Activated T-helper 2 cell treated with anti-CD3 and anti-CD28 coated beads, Interferon-gamma antibody, Interleukin-2, Interleukin-4, amounts not matched to agents 10 μg/mL and 5 μg/mL and 100 μg/mL, durations not matched to agents 14 hours and 24 hours and 36 hours (primary cell): ENCODE measurements at regions of chr7 and their contacts with region 1.

Region 1: DNA sequence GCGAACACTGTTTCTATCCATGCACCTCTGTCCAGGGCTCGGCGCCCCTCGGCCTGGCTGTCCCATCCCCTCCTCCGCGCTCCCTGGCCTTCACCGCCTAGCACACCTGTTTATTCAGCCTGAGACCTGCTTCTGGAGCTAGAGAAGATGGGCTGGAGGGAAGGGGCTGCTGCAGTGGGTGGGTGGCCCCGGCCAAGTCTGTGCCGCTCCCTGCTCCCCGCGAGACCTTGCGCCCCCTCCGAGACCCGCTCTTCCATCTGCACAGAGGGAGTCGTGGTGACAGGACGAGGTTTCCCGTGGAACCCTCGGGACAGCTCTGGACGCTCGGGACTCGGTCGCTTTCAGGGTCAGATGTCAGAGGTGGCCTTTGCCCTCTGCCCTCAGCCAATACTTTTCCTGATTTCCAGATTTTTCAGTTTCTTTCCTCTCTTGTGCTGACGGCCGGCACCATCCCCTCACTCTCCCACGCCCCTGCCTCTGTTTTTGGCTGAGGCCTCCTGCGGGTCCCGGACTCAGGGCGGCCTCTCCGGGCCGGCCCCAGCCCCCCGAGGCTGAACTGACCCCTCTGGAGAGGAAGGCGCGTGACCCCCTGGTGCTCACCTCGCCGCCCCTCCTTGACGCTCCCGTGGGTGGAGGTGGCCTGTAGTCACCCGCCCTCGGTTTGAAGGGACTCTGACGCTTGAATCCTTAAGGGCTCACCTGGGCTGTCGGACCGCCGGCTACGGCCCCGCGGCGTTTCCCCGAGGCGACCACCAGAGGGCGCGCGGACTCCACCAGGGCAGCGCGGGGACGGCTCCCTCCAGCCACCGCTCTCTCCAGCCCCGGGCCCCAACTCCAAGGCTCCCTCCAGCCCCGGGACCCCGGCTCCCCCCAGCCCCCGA is 15.6 kb downstream of the SHH start:
- DNase-seq: peak; percentile 54
- H3K4me3 Mint-ChIP-seq: no peak overlapping the region
- H3K27ac Mint-ChIP-seq: no peak overlapping the region
- H3K4me1 Mint-ChIP-seq: peaks cover 5% of the 10 kb centered on the region
- H3K27me3 Mint-ChIP-seq: peaks cover 35% of the 10 kb centered on the region

Region 2: GRCh38 chr7:155213955-155214740 is 582.5 kb before region 1 on chr7:
- intact Hi-C with region 1: no loop called
- DNase-seq: no peak
- H3K4me3 Mint-ChIP-seq: no peak overlapping the region
- H3K27ac Mint-ChIP-seq: no peak overlapping the region
- H3K4me1 Mint-ChIP-seq: peaks cover 12% of the 10 kb centered on the region
- H3K27me3 Mint-ChIP-seq: no peaks in the 10 kb centered on the region

Region 3: DNA sequence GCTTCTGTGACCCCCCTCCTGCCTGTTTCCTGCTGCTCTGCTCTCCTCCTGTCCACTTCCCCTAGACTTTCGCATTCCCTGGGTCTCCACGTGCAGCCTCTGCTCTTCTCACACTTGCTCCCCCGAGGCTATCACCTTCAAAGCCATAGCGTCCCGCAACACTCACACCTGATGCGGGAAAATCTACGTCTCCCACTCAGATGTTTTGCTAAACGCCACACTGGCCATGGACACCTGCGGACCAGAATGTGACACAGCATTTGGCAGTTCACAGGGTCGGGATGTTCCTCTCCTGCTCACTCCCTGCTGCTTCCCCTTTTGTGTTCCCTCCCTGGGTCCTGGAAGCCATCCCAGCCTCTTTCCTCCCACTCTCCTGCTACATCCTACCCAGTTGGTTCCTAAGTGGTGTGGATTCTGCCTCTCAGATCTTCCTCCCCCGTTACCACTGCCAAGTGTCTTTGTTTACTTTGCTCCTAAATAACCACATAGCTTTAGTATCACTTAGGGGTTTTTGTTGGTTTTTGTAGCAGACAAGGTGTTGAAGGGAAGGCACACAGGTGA is 185.9 kb before region 1 on chr7:
- intact Hi-C with region 1: no loop called
- DNase-seq: no peak
- H3K4me3 Mint-ChIP-seq: no peak overlapping the region
- H3K27ac Mint-ChIP-seq: no peak overlapping the region
- H3K4me1 Mint-ChIP-seq: no peaks in the 10 kb centered on the region
- H3K27me3 Mint-ChIP-seq: peaks cover 13% of the 10 kb centered on the region

Region 4: DNA sequence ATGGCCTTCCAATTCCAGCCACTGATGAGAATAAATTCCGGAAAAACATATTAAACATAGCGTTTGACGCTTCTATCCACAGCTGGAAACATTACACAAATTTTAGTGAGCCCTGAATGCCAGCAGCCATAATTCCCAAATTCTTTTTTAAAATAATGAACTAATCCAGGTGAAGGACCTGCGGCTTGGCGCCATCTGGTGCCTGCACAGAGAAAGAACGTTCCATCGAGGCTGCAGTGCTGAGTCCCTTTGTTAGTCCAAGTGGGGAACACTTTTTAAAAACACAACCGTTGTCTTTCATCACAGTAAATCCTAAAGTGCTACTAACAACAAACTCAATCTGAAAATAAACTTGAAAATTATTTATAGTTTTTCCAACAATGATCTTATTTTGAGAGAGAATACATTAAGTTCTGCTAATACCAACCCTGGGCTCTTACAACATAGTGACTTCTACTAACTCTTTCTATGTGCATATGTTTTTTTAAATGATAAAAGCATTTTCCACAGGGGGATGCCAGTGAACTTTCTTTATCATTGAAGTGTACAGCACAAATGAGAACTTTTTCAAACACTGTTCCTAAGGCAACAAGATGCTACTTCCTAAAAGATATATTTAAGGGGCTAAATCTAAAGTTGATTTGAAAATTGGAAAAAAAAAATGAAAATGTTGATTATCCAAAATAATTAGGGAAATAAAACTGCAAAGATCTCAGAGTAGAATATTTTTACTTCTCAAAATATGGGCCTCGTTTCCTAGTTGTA is 677.0 kb after region 1 on chr7:
- intact Hi-C with region 1: loop called (anchors 5 kb)
- DNase-seq: no peak
- H3K4me3 Mint-ChIP-seq: no peak overlapping the region
- H3K27ac Mint-ChIP-seq: no peak overlapping the region
- H3K4me1 Mint-ChIP-seq: no peaks in the 10 kb centered on the region
- H3K27me3 Mint-ChIP-seq: peaks cover 27% of the 10 kb centered on the region